HCT116 (cell line): ENCODE measurements at regions of chr6 and their contacts with region 1.

Region 1: GRCh38 chr6:55239099-55239498 is 64.8 kb downstream of the HCRTR2 start:
- DNase-seq: no peak
- ATAC-seq: no peak
- H3K4me3 ChIP-seq: no peak overlapping the region
- H3K27ac ChIP-seq: no peak overlapping the region
- H3K4me1 ChIP-seq: no peaks in the 10 kb centered on the region
- H3K27me3 ChIP-seq: no peaks in the 10 kb centered on the region
- CTCF ChIP-seq: no peak
- POLR2A ChIP-seq: no peak
- RAD21 ChIP-seq: no peak

Region 2: DNA sequence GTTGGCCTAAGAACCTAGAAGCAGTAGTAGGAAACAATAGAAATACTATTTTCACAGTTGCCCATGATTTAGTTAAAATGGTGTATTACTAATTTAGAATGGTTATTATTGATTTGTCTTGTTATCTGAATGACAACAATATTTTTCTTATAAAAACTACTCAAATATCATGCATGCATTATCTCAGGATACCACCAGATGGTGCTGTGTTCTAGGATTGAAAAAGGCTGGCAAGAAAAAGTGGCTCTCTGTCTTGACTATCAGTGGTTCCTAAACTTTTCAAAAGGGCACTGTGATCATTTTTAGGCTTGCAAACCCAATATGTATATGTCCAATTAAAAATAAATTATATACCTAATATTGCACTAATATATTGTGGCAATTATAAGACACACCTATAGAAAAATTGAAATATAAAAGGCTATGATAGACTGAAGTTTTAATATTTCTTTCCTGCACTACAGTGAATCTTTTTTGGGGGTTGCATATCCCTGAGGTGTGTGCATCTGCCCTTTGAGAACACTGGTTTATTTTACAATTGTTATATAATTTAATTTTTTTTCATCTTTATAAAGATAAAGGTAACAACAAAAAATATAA is 1259.5 kb before region 1 on chr6:
- CTCF ChIA-PET with region 1: no interaction called
- POLR2A ChIA-PET with region 1: no interaction called
- RAD21 ChIA-PET with region 1: interaction called in 1 of 2 experiments, 4 read pairs
- intact Hi-C with region 1: loop called (anchors 2 kb)
- DNase-seq: peak; percentile 46
- ATAC-seq: no peak; the same call in 1 of the 2 replicates
- H3K4me3 ChIP-seq: no peak overlapping the region
- H3K27ac ChIP-seq: no peak overlapping the region
- H3K4me1 ChIP-seq: peaks cover 7 to 25% of the 10 kb centered on the region in 2 experiments
- H3K27me3 ChIP-seq: no peaks in the 10 kb centered on the region
- CTCF ChIP-seq: peak; percentile 66 to 82 (median 75)
- POLR2A ChIP-seq: no peak
- RAD21 ChIP-seq: peak; percentile 81

Region 3: GRCh38 chr6:53986165-53986720 is 1252.9 kb before region 1 on chr6:
- CTCF ChIA-PET with region 1: interaction called, 3 read pairs
- POLR2A ChIA-PET with region 1: no interaction called
- RAD21 ChIA-PET with region 1: interaction called, 4 to 5 read pairs
- intact Hi-C with region 1: loop called (anchors 2 kb)
- DNase-seq: peak; percentile 34
- ATAC-seq: peak; percentile 59
- H3K4me3 ChIP-seq: no peak overlapping the region
- H3K27ac ChIP-seq: no peak overlapping the region
- H3K4me1 ChIP-seq: peaks cover 8 to 36% of the 10 kb centered on the region in 2 experiments
- H3K27me3 ChIP-seq: no peaks in the 10 kb centered on the region
- CTCF ChIP-seq: peak; percentile 71 to 96 (median 77)
- POLR2A ChIP-seq: no peak
- RAD21 ChIP-seq: peak; percentile 93